H1 (cell line): ENCODE measurements at regions of chr9 and their contacts with region 1.

Region 1: GRCh38 chr9:27340961-27341511 is 44.1 kb upstream of the EQTN start:
- DNase-seq: no peak
- H3K4me3 ChIP-seq: no peak overlapping the region; a peak in 1 of 8 replicates
- H3K27ac ChIP-seq: no peak overlapping the region
- H3K4me1 ChIP-seq: peaks cover 2 to 16% (median 12%) of the 10 kb centered on the region in 4 experiments; a peak in 6 of 7 replicates
- H3K27me3 ChIP-seq: no peaks in the 10 kb centered on the region
- CTCF ChIP-seq: no peak
- EP300 ChIP-seq: no peak
- POLR2A ChIP-seq: no peak
- RAD21 ChIP-seq: no peak

Region 2: GRCh38 chr9:27377811-27378456 is 36.9 kb after region 1 on chr9:
- CTCF ChIA-PET with region 1: no interaction called
- POLR2A ChIA-PET with region 1: no interaction called
- DNase-seq: no peak
- H3K4me3 ChIP-seq: no peak overlapping the region
- H3K27ac ChIP-seq: no peak overlapping the region
- H3K4me1 ChIP-seq: peaks cover 0 to 4% (median 0%) of the 10 kb centered on the region in 4 experiments; a peak in 2 of 7 replicates
- H3K27me3 ChIP-seq: no peaks in the 10 kb centered on the region
- CTCF ChIP-seq: no peak
- EP300 ChIP-seq: no peak
- POLR2A ChIP-seq: no peak
- RAD21 ChIP-seq: no peak

Region 3: DNA sequence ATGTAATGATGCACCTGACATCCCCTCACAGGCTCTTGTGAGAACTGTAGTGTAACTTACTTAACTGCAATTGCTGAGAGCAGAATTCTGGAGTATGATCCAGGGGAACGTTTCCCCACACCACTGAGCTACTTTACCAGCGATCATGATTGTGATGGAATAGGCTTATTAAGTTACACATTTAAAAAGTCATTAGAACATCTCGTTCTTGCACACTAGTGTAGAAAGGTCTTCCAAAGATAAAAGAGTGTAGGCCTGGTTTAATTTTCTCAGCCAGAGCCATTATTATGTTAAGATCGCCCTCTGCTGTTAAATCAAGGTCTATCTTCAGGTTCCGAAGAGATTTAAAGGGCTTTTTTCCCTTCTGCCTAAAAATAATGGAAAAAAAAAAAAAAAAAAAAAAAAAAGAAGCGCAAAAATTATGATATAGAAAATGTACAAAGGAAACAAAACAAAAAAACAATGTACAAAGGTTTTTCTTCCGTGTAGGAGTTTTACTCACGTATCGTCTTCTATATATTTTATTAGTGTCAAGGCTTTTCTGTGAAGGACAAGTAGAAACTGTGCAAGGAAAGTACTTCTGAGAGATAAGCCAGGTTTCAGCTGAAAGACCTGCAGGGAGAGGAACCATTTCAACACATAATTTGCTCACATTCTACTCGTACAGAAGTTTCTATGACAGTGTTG is 207.2 kb after region 1 on chr9:
- CTCF ChIA-PET with region 1: interaction called, 13 read pairs
- POLR2A ChIA-PET with region 1: no interaction called
- DNase-seq: no peak
- H3K4me3 ChIP-seq: no peak overlapping the region
- H3K27ac ChIP-seq: no peak overlapping the region
- H3K4me1 ChIP-seq: peaks cover 0 to 4% (median 0%) of the 10 kb centered on the region in 4 experiments; a peak in 1 of 7 replicates
- H3K27me3 ChIP-seq: no peaks in the 10 kb centered on the region
- CTCF ChIP-seq: peak in 2 of 3 experiments; percentile 23 to 37; a peak in 2 of 4 replicates
- EP300 ChIP-seq: no peak
- POLR2A ChIP-seq: no peak
- RAD21 ChIP-seq: peak; percentile 73 to 75